ENCODE measurements at regions of chr6 and their contacts with region 1.

Region 1: GRCh38 chr6:31356946-31357466 is at the start of gene HLA-B:
- DNase-seq: peak; percentile 82 to 93 (median 85)
- H3K4me3 ChIP-seq: peak within 1 kb of the TSS; percentile 68 to 86
- H3K4me3 Mint-ChIP-seq: peak within 1 kb of the TSS; percentile 97 to 99 (median 99)
- H3K27ac ChIP-seq: peak within 1 kb of the TSS; percentile 99
- H3K27ac Mint-ChIP-seq: peak within 1 kb of the TSS; percentile 100
- H3K4me1 ChIP-seq: peaks cover 59% of the 10 kb centered on the region
- H3K4me1 Mint-ChIP-seq: peaks cover 44 to 82% (median 55%) of the 10 kb centered on the region in 4 donors
- H3K27me3 ChIP-seq: no peaks in the 10 kb centered on the region
- H3K27me3 Mint-ChIP-seq: peaks cover 1% of the 10 kb centered on the region in 2 donors
- total RNA-seq, gene HLA-B: 5,565 to 5,762 TPM

Region 2: DNA sequence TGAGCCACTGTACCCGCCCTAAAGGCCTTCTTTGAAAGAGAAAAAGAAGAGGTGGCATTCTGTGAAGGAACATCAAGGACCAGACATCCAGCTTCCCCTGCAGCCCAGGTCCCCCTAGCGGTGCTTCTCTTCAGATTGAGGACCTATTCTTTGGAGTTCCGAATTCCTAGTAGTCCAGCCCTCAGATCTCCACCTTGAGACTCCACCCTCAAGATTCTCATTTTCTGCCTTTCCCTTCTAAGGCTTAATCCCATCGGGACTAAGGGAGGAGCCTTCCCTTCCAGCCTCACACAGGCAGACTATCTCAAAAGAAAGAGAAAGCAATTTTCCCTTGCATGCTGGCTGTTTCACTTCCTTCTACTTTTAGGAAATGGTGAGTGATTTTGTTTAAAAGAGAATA is 314.2 kb before region 1 on chr6:
- CTCF ChIA-PET with region 1: no interaction called
- POLR2A ChIA-PET with region 1: no interaction called
- intact Hi-C with region 1: no loop called
- DNase-seq: peak in 2 of 5 donors; percentile 5 to 20
- H3K4me3 ChIP-seq: no peak overlapping the region
- H3K4me3 Mint-ChIP-seq: peak overlapping the region in 4 of 8 donors; percentile 10 to 60 (median 40)
- H3K27ac ChIP-seq: no peak overlapping the region
- H3K27ac Mint-ChIP-seq: peak overlapping the region in 1 of 7 donors; percentile 59
- H3K4me1 ChIP-seq: no peaks in the 10 kb centered on the region
- H3K4me1 Mint-ChIP-seq: peaks cover 0 to 3% (median under 1%) of the 10 kb centered on the region in 4 donors
- H3K27me3 ChIP-seq: no peaks in the 10 kb centered on the region
- H3K27me3 Mint-ChIP-seq: peaks cover 18 to 36% of the 10 kb centered on the region in 2 donors

Region 3: DNA sequence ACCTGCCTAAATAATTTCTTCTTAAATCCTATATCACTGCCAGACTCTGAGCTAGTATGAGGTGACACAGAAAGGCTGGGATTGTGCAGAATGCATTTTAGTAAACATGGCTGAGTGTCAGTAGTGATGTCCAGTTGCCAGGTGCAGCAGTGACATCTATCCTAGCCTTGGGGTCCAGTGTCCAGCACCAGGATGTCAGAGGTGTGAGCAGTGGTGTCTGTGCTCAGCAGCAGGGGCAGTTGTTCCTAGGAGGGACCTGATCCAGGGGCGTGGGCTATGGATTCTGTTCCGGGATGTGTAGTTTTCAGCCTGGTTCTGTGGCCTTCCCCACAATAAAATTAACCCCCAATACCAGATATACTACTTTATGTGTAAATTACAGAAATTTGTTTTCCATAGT is 91.1 kb before region 1 on chr6:
- CTCF ChIA-PET with region 1: no interaction called
- POLR2A ChIA-PET with region 1: interaction called, 177 read pairs
- intact Hi-C with region 1: no loop called
- DNase-seq: no peak
- H3K4me3 ChIP-seq: no peak overlapping the region
- H3K4me3 Mint-ChIP-seq: peak overlapping the region in 1 of 8 donors; percentile 66
- H3K27ac ChIP-seq: no peak overlapping the region
- H3K27ac Mint-ChIP-seq: peak overlapping the region in 4 of 7 donors; percentile 37 to 100 (median 63)
- H3K4me1 ChIP-seq: peaks cover 33% of the 10 kb centered on the region
- H3K4me1 Mint-ChIP-seq: peaks cover 25 to 61% (median 45%) of the 10 kb centered on the region in 4 donors
- H3K27me3 ChIP-seq: no peaks in the 10 kb centered on the region
- H3K27me3 Mint-ChIP-seq: no peaks in the 10 kb centered on the region

Region 4: DNA sequence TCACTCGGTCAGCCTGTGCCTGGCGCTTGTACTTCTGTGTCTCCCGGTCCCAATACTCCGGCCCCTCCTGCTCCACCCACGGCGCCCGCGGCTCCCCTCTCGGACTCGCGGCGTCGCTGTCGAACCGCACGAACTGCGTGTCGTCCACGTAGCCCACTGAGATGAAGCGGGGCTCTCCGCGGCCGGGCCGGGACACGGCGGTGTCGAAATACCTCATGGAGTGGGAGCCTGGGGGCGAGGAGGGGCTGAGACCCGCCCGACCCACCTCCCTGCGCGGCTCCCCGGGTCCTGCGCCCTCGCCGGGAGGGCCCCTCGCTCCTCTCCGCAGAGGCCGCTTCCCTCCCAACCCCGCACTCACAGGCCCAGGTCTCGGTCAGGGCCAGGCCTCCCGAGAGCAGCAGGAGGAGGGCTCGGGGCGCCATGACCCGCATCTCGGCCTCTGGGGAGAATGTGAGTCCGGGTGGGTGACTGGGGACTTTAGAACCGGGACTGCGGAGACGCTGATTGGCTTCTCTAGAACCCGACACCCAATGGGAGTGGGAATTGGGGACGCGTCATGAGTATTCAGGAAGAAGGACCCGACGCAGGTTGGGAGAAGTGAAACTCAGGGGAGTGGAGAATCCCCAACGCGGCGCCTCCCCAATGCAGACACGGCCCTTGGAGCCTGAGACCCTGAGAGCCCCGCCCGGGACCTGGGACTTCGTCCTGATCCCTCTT is 85.2 kb before region 1 on chr6 and contains the start of gene HLA-C:
- CTCF ChIA-PET with region 1: no interaction called
- POLR2A ChIA-PET with region 1: interaction called, 177 read pairs
- intact Hi-C with region 1: loop called (anchors 1 kb)
- DNase-seq: peak; percentile 92 to 98 (median 93)
- H3K4me3 ChIP-seq: peak within 1 kb of the TSS; percentile 88 to 94
- H3K4me3 Mint-ChIP-seq: peak within 1 kb of the TSS; percentile 95 to 100 (median 98)
- H3K27ac ChIP-seq: peak within 1 kb of the TSS; percentile 100
- H3K27ac Mint-ChIP-seq: peak within 1 kb of the TSS; percentile 99 to 100 (median 100)
- H3K4me1 ChIP-seq: peaks cover 51% of the 10 kb centered on the region
- H3K4me1 Mint-ChIP-seq: peaks cover 45 to 77% (median 54%) of the 10 kb centered on the region in 4 donors
- H3K27me3 ChIP-seq: no peaks in the 10 kb centered on the region
- H3K27me3 Mint-ChIP-seq: peaks cover 0 to 2% of the 10 kb centered on the region in 2 donors
- total RNA-seq, gene HLA-C: 1,481 to 1,487 TPM